ENCODE measurements at regions of chr1 and their contacts with region 1.

Region 1: DNA sequence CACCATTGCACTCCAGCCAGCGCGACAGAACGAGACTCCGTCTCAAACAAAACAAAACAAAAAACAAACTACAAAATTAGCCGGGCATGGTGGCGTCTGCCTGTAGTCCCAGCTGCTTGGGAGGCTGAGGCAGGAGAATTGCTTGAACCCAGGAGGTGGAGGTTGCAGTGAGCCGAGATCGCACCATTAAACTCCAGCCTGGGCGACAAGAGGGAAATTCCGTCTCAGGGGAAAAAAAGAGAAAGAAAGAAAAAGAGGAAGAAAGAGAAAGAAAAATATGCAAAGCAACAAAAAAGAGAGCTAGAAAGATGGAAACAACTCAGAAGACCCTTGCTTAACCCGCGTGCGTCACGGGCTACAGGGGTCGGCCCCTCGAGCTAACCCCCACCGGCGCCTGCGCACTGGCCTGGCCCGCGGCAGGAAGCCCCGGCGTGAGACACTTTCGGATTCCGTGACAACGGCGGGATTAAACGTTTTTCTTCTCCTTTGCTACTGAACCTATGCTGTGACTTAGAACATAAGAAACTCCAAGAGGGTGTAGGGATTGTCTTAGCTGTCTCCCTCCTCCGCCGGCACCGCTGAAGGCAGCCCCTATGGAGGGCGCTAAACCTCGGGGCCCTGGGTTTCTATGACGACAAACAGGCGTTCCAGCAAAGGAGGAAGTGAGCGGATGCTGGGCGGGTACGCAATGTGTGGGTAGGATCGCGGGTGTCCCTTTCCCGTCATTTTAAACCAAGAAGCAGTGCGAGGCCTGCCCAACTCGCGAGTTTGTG is at the start of gene AXDND1:
- DNase-seq: peak; percentile 73 to 87
- ATAC-seq: peak; percentile 94 to 98
- H3K4me3 ChIP-seq: peak within 1 kb of the TSS; percentile 72
- H3K27ac ChIP-seq: peak within 1 kb of the TSS; percentile 87 to 94
- H3K4me1 ChIP-seq: 0 out of 3 replicates have a peak, but pooled peaks cover 4% of the 10 kb centered on the region
- CTCF ChIP-seq: no peak
- EP300 ChIP-seq: no peak
- POLR2A ChIP-seq: peak; percentile 34; the same call in 1 of the 2 replicates
- RAD21 ChIP-seq: no peak
- polyA plus RNA-seq, gene AXDND1: 0.56 and 0.71 TPM in 2 replicates

Region 2: GRCh38 chr1:179087665-179088225 is 277.8 kb before region 1 on chr1:
- CTCF ChIA-PET with region 1: interaction called, 13 read pairs
- POLR2A ChIA-PET with region 1: no interaction called
- DNase-seq: no peak
- ATAC-seq: no peak
- H3K4me3 ChIP-seq: no peak overlapping the region
- H3K27ac ChIP-seq: peak overlapping the region in 1 of 2 experiments; percentile 24; a peak in 1 of 6 replicates
- H3K4me1 ChIP-seq: peaks cover 41% of the 10 kb centered on the region
- CTCF ChIP-seq: no peak
- EP300 ChIP-seq: no peak
- POLR2A ChIP-seq: no peak
- RAD21 ChIP-seq: no peak

Region 3: GRCh38 chr1:179293340-179294327 is 71.9 kb before region 1 on chr1 and contains the start of gene SOAT1:
- CTCF ChIA-PET with region 1: interaction called, 15 read pairs
- POLR2A ChIA-PET with region 1: interaction called, 12 read pairs
- DNase-seq: peak; percentile 94
- ATAC-seq: peak; percentile 96
- H3K4me3 ChIP-seq: peak within 1 kb of the TSS; percentile 76
- H3K27ac ChIP-seq: peak within 1 kb of the TSS; percentile 85 to 92
- H3K4me1 ChIP-seq: peaks cover 28% of the 10 kb centered on the region
- CTCF ChIP-seq: no peak
- EP300 ChIP-seq: no peak
- POLR2A ChIP-seq: peak; percentile 88
- RAD21 ChIP-seq: no peak
- polyA plus RNA-seq, gene SOAT1: 50.3 and 62.1 TPM in 2 replicates

Region 4: DNA sequence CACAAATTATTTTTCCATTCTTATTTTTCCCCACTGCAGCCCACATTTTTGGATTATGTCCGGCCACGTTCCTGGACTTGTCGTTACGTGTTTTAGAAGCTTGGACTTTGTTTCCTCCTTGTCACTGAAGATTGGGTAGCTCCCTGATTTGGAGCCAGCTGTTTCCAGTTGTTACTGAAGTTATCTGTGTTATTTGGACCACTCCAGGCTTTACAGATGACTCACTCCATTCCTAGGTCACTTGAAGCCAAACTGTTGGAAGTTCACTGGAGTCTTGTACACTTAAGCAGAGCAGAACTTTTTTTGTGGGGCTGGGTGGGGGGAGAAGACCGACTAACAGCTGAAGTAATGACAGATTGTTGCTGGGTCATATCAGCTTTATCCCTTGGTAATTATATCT is 12.0 kb before region 1 on chr1:
- CTCF ChIA-PET with region 1: interaction called, 10 read pairs
- POLR2A ChIA-PET with region 1: no interaction called
- DNase-seq: no peak
- ATAC-seq: 0 out of 6 replicates have a peak, but pooled peaks of 1 of the 2 experiments have one; percentile 30
- H3K4me3 ChIP-seq: no peak overlapping the region
- H3K27ac ChIP-seq: no peak overlapping the region
- H3K4me1 ChIP-seq: peaks cover 7% of the 10 kb centered on the region; the same call in 2 of the 3 replicates
- CTCF ChIP-seq: no peak
- EP300 ChIP-seq: no peak
- POLR2A ChIP-seq: no peak
- RAD21 ChIP-seq: no peak

Region 5: GRCh38 chr1:179393721-179394120 is 28.2 kb after region 1 on chr1:
- CTCF ChIA-PET with region 1: no interaction called
- POLR2A ChIA-PET with region 1: no interaction called
- DNase-seq: no peak
- ATAC-seq: no peak
- H3K4me3 ChIP-seq: no peak overlapping the region
- H3K27ac ChIP-seq: no peak overlapping the region
- H3K4me1 ChIP-seq: no peaks in the 10 kb centered on the region
- CTCF ChIP-seq: no peak
- EP300 ChIP-seq: no peak
- POLR2A ChIP-seq: no peak
- RAD21 ChIP-seq: no peak

Region 6: DNA sequence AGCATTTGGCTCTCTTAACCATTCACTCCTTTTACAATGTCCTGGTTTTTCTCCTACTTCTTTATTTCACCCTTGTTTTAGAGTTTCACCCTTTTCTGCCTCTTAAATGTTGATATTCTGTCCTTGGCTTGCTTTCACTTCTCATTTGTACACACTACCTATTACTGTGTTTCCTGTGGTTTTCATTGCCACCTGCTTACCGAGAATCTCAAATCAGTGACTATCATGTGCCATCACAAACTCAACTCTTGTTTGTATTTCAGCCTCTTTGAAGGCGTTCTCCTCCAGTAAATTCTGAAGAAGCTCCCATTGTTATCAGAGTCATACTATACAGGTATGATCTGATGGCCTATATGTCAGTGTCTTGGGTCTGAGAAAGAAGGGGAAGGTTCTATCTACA is 144.5 kb after region 1 on chr1:
- CTCF ChIA-PET with region 1: no interaction called
- POLR2A ChIA-PET with region 1: no interaction called
- DNase-seq: no peak
- ATAC-seq: no peak
- H3K4me3 ChIP-seq: no peak overlapping the region
- H3K27ac ChIP-seq: no peak overlapping the region
- H3K4me1 ChIP-seq: no peaks in the 10 kb centered on the region
- CTCF ChIP-seq: no peak
- EP300 ChIP-seq: no peak
- POLR2A ChIP-seq: no peak
- RAD21 ChIP-seq: no peak

Measured in A549 (cell line).